Astrocyte of the cerebellum (primary cell): ENCODE measurements at regions of chr4 and their contacts with region 1.

Region 1: GRCh38 chr4:2630556-2631273 is 94.3 kb downstream of the FAM193A start:
- DNase-seq: no peak
- H3K4me3 ChIP-seq: no peak overlapping the region
- CTCF ChIP-seq: no peak

Region 2: GRCh38 chr4:2241410-2242353 is 389.0 kb before region 1 on chr4 and contains the starts of genes HAUS3 and POLN:
- in situ Hi-C with region 1: loop called (anchors 10 kb)
- DNase-seq: peak; percentile 95
- H3K4me3 ChIP-seq: peak within 1 kb of the TSS; percentile 84
- CTCF ChIP-seq: peak; percentile 5

Region 3: DNA sequence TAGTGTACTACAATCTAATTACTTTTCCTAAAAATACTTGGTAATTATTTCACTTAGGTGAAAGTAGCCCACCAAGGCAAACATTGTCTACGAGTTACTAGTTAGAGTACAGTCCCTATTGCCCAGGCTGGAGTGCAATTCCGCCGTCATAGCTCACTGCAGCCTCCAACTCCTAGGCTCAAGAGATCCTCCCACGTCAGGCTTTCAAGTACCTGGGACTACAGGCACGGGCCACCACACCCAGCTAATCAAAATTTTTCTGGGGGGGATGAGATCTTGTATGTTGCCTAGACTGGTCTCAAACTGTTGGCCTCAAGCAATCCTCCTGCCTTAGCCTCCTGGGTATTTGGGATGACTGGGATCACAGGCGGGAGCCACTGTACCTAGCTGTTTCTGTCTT is 72.4 kb before region 1 on chr4:
- in situ Hi-C with region 1: loop called (anchors 5 kb)
- DNase-seq: no peak
- H3K4me3 ChIP-seq: no peak overlapping the region
- CTCF ChIP-seq: no peak

Region 4: GRCh38 chr4:2583517-2583916 is 47.2 kb before region 1 on chr4:
- in situ Hi-C with region 1: loop called (anchors 5 kb)
- DNase-seq: no peak
- H3K4me3 ChIP-seq: no peak overlapping the region
- CTCF ChIP-seq: no peak

Region 5: GRCh38 chr4:2673157-2673556 is 42.4 kb after region 1 on chr4:
- in situ Hi-C with region 1: loop called (anchors 5 kb)
- DNase-seq: no peak
- H3K4me3 ChIP-seq: no peak overlapping the region
- CTCF ChIP-seq: peak; percentile 49